ENCODE measurements at regions of chr1 and their contacts with region 1.

Region 1: DNA sequence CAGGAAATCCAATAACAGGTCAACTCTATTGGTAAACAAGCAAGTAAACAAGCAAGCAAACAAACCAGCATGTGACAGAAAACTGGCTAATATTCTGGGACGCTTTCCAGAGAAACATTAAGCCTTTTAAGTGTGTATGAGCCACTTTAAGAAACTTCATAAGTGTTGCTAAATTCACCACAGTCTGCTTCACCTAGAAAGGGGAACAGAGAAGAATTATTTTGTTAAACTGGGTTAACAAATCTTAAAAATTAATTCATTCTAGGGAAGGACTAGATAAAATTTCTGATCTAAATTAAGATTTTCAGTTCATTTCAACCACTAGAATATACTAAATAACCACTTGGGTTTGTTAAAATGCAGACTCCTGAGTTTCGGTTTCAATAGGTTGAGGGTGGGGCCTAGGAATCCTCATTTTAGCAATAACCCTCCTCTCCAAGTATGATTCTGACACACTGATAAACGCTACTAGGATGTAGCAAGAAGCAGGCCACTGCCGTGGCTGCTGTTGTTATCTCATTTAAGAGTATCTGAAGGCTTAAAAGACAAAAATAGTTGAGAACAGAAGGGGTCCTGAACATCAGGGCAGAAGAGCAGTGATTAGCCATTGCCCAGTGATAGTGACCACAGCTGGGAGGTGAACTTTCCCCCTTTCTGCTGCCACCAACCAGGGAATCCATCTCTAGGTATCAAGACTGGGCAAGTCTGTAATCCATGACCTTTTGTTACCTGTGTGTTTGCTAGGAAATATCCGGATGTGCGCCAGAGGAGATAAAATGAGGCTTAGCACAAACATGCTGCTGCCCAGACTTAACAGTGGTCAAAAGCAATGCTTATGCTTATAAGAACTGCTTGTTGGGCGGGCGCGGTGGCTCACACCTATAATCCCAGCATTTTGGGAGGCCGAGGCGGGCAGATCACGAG is 11.2 kb downstream of the CREG1 start:
- DNase-seq: no peak
- ATAC-seq: no peak
- H3K4me3 ChIP-seq: no peak overlapping the region
- H3K4me3 Mint-ChIP-seq: no peak overlapping the region
- H3K27ac ChIP-seq: no peak overlapping the region
- H3K27ac Mint-ChIP-seq: no peak overlapping the region
- H3K4me1 ChIP-seq: no peaks in the 10 kb centered on the region
- H3K4me1 Mint-ChIP-seq: peaks cover 10% of the 10 kb centered on the region
- H3K27me3 ChIP-seq: no peaks in the 10 kb centered on the region
- H3K27me3 Mint-ChIP-seq: no peaks in the 10 kb centered on the region
- CTCF ChIP-seq: no peak

Region 2: GRCh38 chr1:167263819-167264464 is 278.4 kb before region 1 on chr1:
- CTCF ChIA-PET with region 1: interaction called, 72 read pairs
- POLR2A ChIA-PET with region 1: interaction called, 4 read pairs
- intact Hi-C with region 1: no loop called
- DNase-seq: peak in 2 of 9 experiments; percentile 6 to 35
- ATAC-seq: peak; percentile 35
- H3K4me3 ChIP-seq: no peak overlapping the region
- H3K4me3 Mint-ChIP-seq: no peak overlapping the region
- H3K27ac ChIP-seq: peak overlapping the region in 1 of 2 experiments; percentile 18
- H3K27ac Mint-ChIP-seq: no peak overlapping the region
- H3K4me1 ChIP-seq: peaks cover 48% of the 10 kb centered on the region
- H3K4me1 Mint-ChIP-seq: peaks cover 34% of the 10 kb centered on the region
- H3K27me3 ChIP-seq: no peaks in the 10 kb centered on the region
- H3K27me3 Mint-ChIP-seq: no peaks in the 10 kb centered on the region
- CTCF ChIP-seq: no peak

Region 3: DNA sequence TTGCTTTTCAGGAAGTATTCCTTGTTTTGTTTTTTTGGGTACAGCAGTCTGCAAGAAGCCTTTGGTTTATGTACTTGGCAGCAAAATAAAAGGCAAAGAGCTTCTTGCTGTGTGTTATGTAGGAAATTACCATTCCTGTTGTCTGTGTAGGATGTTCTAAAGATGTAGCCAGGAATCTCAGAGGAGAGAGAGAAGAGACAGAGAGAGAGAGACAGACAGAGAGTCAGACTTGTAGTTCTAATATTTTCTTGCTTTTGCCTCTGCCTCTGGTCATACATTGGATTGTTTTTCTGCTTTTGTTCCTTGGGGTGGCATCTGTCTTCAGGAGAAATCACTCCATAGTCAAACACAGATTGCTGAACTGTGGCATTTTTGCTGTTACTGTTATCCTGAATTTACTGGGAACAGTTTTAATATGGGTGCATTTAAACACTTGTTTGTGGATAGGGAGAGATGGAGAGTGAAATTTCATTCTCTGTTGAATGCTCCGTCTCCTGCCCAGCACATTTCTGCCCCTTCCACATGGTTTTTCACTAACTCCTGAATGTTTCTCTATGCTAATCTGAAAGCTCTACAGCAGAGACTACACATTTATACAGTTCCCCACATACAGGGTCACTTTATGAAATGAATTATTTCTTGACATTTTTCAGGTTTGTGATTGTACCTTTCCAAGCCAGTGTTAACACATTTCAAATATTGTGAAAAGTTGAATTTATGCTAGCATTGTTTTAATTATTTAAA is 271.9 kb before region 1 on chr1:
- CTCF ChIA-PET with region 1: interaction called, 72 read pairs
- POLR2A ChIA-PET with region 1: interaction called, 4 read pairs
- intact Hi-C with region 1: no loop called
- DNase-seq: no peak
- ATAC-seq: no peak
- H3K4me3 ChIP-seq: no peak overlapping the region
- H3K4me3 Mint-ChIP-seq: no peak overlapping the region
- H3K27ac ChIP-seq: no peak overlapping the region
- H3K27ac Mint-ChIP-seq: no peak overlapping the region
- H3K4me1 ChIP-seq: peaks cover 9% of the 10 kb centered on the region
- H3K4me1 Mint-ChIP-seq: peaks cover 43% of the 10 kb centered on the region
- H3K27me3 ChIP-seq: no peaks in the 10 kb centered on the region
- H3K27me3 Mint-ChIP-seq: no peaks in the 10 kb centered on the region
- CTCF ChIP-seq: no peak

Region 4: GRCh38 chr1:167401260-167401873 is 141.0 kb before region 1 on chr1:
- CTCF ChIA-PET with region 1: interaction called, 19 read pairs
- POLR2A ChIA-PET with region 1: interaction called, 3 read pairs
- intact Hi-C with region 1: loop called in 1 of 2 experiments (anchors 2 kb)
- DNase-seq: peak; percentile 4 to 79 (median 51)
- ATAC-seq: peak; percentile 73
- H3K4me3 ChIP-seq: no peak overlapping the region
- H3K4me3 Mint-ChIP-seq: no peak overlapping the region
- H3K27ac ChIP-seq: no peak overlapping the region
- H3K27ac Mint-ChIP-seq: no peak overlapping the region
- H3K4me1 ChIP-seq: no peaks in the 10 kb centered on the region
- H3K4me1 Mint-ChIP-seq: peaks cover 5% of the 10 kb centered on the region
- H3K27me3 ChIP-seq: no peaks in the 10 kb centered on the region
- H3K27me3 Mint-ChIP-seq: no peaks in the 10 kb centered on the region
- CTCF ChIP-seq: peak; percentile 36

Region 5: GRCh38 chr1:167430134-167430856 is 112.1 kb before region 1 on chr1:
- CTCF ChIA-PET with region 1: interaction called, 10 read pairs
- POLR2A ChIA-PET with region 1: no interaction called
- intact Hi-C with region 1: no loop called
- DNase-seq: peak in 3 of 9 experiments; percentile 17 to 65 (median 50)
- ATAC-seq: peak; percentile 33
- H3K4me3 ChIP-seq: no peak overlapping the region
- H3K4me3 Mint-ChIP-seq: no peak overlapping the region
- H3K27ac ChIP-seq: peak overlapping the region in 1 of 2 experiments; percentile 78
- H3K27ac Mint-ChIP-seq: peak overlapping the region; percentile 87
- H3K4me1 ChIP-seq: peaks cover 17% of the 10 kb centered on the region
- H3K4me1 Mint-ChIP-seq: peaks cover 71% of the 10 kb centered on the region
- H3K27me3 ChIP-seq: no peaks in the 10 kb centered on the region
- H3K27me3 Mint-ChIP-seq: no peaks in the 10 kb centered on the region
- CTCF ChIP-seq: no peak

Region 6: GRCh38 chr1:167442124-167442848 is 100.1 kb before region 1 on chr1:
- CTCF ChIA-PET with region 1: interaction called, 16 read pairs
- POLR2A ChIA-PET with region 1: interaction called, 5 read pairs
- intact Hi-C with region 1: no loop called
- DNase-seq: peak; percentile 78 to 91 (median 89)
- ATAC-seq: peak; percentile 80
- H3K4me3 ChIP-seq: no peak overlapping the region
- H3K4me3 Mint-ChIP-seq: no peak overlapping the region
- H3K27ac ChIP-seq: peak overlapping the region in 1 of 2 experiments; percentile 71
- H3K27ac Mint-ChIP-seq: peak overlapping the region; percentile 85
- H3K4me1 ChIP-seq: peaks cover 81% of the 10 kb centered on the region
- H3K4me1 Mint-ChIP-seq: peaks cover 91% of the 10 kb centered on the region
- H3K27me3 ChIP-seq: no peaks in the 10 kb centered on the region
- H3K27me3 Mint-ChIP-seq: no peaks in the 10 kb centered on the region
- CTCF ChIP-seq: peak; percentile 75

Region 7: DNA sequence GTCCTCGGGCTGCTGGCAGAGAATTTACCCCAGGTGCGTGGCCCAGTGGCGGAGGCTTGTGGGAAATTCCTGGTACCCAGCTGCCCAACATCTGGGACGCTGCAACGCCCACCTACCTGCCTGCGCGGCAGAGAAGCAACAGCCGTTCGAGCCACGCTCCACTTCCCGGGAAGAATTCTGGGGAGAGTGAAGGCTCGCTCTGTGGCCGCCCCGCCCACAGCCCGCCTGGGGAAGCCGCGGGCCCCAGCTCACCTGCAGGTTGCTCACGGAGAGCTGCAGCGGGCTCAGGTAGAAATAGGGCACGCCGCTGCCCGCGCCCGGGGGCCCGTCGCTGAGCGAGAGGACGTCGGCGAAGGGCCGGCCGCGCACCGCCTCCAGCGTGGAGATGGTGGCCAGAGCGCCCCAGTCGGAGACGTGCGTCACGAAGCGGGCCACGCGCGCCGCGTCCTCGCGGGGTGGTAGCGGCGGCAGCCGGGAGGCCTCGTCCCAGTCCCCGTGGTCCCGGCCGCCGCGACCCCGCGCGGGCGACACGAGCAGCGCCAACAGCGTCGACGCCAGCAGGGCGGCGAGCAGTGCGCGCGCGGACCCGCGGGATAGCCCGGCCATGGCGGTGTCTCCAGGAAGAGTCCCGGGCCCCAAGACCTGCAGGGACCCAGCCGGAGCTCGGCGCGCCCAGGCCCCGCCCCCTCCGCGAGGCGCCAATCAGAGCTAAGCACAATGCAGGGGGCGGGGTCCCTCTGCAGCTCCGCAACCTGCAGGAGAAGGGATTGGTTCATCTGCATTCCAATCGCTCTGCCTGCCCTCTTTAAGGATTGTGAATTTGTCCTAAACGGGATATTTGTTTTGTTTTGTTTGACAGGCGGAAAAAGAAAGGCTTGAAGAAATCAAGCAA is 11.0 kb after region 1 on chr1 and contains the start of gene CREG1:
- CTCF ChIA-PET with region 1: interaction called, 34 read pairs
- POLR2A ChIA-PET with region 1: no interaction called
- intact Hi-C with region 1: loop called in 1 of 2 experiments (anchors 2 kb)
- DNase-seq: peak; percentile 70 to 93 (median 88)
- ATAC-seq: peak; percentile 97
- H3K4me3 ChIP-seq: peak within 1 kb of the TSS; percentile 62 to 70
- H3K4me3 Mint-ChIP-seq: peak within 1 kb of the TSS; percentile 88
- H3K27ac ChIP-seq: peak within 1 kb of the TSS in 1 of 2 experiments; percentile 57
- H3K27ac Mint-ChIP-seq: no peak within 1 kb of the TSS
- H3K4me1 ChIP-seq: peaks cover 18% of the 10 kb centered on the region
- H3K4me1 Mint-ChIP-seq: peaks cover 47% of the 10 kb centered on the region
- H3K27me3 ChIP-seq: no peaks in the 10 kb centered on the region
- H3K27me3 Mint-ChIP-seq: no peaks in the 10 kb centered on the region
- CTCF ChIP-seq: no peak
- total RNA-seq, gene CREG1: 9.3 to 9.8 TPM

Measured in CD8-positive, alpha-beta T cell (primary cell).